HepG2 (cell line): ENCODE measurements at regions of chr19 and their contacts with region 1.

Region 1: GRCh38 chr19:5977785-5978605 is at the start of gene RANBP3:
- DNase-seq: peak; percentile 97
- ATAC-seq: peak; percentile 85
- H3K4me3 ChIP-seq: peak within 1 kb of the TSS; percentile 87 to 98 (median 92)
- H3K27ac ChIP-seq: peak within 1 kb of the TSS; percentile 82
- H3K4me1 ChIP-seq: peaks cover 83% of the 10 kb centered on the region
- H3K27me3 ChIP-seq: no peaks in the 10 kb centered on the region; a peak in 1 of 5 replicates
- CTCF ChIP-seq: no peak
- EP300 ChIP-seq: no peak; a peak in 1 of 4 replicates
- POLR2A ChIP-seq: peak; percentile 51 to 70
- RAD21 ChIP-seq: peak; percentile 9; the same call in 1 of the 2 replicates
- total RNA-seq, gene RANBP3: 37.2 and 39.5 TPM in 2 replicates

Region 2: GRCh38 chr19:5803752-5804515 is 174.1 kb before region 1 on chr19:
- CTCF ChIA-PET with region 1: no interaction called
- POLR2A ChIA-PET with region 1: interaction called, 3 read pairs
- in situ Hi-C with region 1: loop called (anchors 5 kb)
- intact Hi-C with region 1: no loop called
- DNase-seq: peak; percentile 83
- ATAC-seq: peak; percentile 88
- H3K4me3 ChIP-seq: peak overlapping the region; percentile 36 to 68 (median 42)
- H3K27ac ChIP-seq: no peak overlapping the region
- H3K4me1 ChIP-seq: peaks cover 67% of the 10 kb centered on the region
- H3K27me3 ChIP-seq: no peaks in the 10 kb centered on the region; a peak in 1 of 5 replicates
- CTCF ChIP-seq: peak; percentile 99
- EP300 ChIP-seq: peak; percentile 7 to 25; a peak in 1 of 4 replicates
- POLR2A ChIP-seq: peak in 1 of 2 experiments; percentile 42; a peak in 1 of 4 replicates
- RAD21 ChIP-seq: peak; percentile 100

Region 3: GRCh38 chr19:5961969-5962945 is 15.7 kb before region 1 on chr19:
- CTCF ChIA-PET with region 1: no interaction called
- POLR2A ChIA-PET with region 1: interaction called, 30 read pairs
- in situ Hi-C with region 1: no loop called
- intact Hi-C with region 1: no loop called
- DNase-seq: peak; percentile 98
- ATAC-seq: peak; percentile 93
- H3K4me3 ChIP-seq: peak overlapping the region; percentile 19 to 68 (median 41); a peak in 5 of 6 replicates
- H3K27ac ChIP-seq: peak overlapping the region; percentile 95
- H3K4me1 ChIP-seq: peaks cover 99% of the 10 kb centered on the region
- H3K27me3 ChIP-seq: no peaks in the 10 kb centered on the region
- CTCF ChIP-seq: peak; percentile 53
- EP300 ChIP-seq: peak; percentile 20 to 82; a peak in 3 of 4 replicates
- POLR2A ChIP-seq: peak; percentile 45 to 85; a peak in 3 of 4 replicates
- RAD21 ChIP-seq: peak; percentile 36; the same call in 1 of the 2 replicates

Region 4: GRCh38 chr19:6000228-6000847 is 22.3 kb after region 1 on chr19:
- CTCF ChIA-PET with region 1: no interaction called
- POLR2A ChIA-PET with region 1: no interaction called
- in situ Hi-C with region 1: no loop called
- intact Hi-C with region 1: no loop called
- DNase-seq: no peak
- ATAC-seq: no peak
- H3K4me3 ChIP-seq: no peak overlapping the region
- H3K27ac ChIP-seq: no peak overlapping the region
- H3K4me1 ChIP-seq: no peaks in the 10 kb centered on the region
- H3K27me3 ChIP-seq: no peaks in the 10 kb centered on the region; a peak in 1 of 5 replicates
- CTCF ChIP-seq: no peak
- EP300 ChIP-seq: no peak
- POLR2A ChIP-seq: no peak
- RAD21 ChIP-seq: no peak

Region 5: DNA sequence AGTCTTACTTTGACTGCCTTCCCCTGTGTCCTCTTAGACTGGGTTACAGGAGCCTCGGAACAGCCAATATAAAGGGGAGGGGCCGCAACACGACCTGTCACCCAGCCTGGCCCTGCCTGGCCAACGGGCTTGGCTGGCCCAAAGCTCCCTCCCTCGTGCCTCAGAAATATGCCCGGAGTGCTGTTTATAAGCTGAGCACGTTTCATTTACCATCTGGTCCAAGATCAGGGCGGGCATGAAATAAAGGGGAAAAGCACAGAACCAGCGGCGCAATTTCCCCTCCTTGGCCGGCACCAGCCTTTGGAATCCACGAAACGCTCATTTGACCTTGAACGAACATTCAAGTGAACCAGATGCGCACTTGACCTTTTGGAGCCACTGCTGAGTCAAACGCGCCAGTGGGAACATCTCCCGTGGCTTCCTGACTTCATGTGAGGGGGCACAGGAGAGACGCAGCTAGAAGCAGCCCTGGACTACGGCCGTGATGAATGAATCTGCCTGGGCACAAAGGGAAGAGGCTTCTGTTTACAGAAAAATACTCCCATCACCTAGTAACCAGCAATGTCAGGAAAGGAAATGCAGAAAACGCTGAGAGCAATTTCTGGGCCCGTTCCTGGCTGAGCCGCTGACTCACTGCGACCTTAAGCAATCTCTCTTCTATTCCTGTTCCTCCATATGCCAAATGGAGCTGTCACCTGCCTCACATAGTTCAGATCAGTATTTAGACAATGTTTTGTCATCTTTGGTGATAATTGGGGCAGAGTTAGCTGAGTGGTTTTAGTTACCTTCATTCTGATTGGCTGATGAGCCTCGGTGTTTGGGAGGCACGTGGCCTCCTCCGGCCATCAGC is 79.0 kb after region 1 on chr19:
- CTCF ChIA-PET with region 1: no interaction called
- POLR2A ChIA-PET with region 1: no interaction called
- in situ Hi-C with region 1: no loop called
- intact Hi-C with region 1: no loop called
- DNase-seq: peak; percentile 77
- ATAC-seq: peak; percentile 75
- H3K4me3 ChIP-seq: peak overlapping the region in 1 of 3 experiments; percentile 25; a peak in 1 of 6 replicates
- H3K27ac ChIP-seq: peak overlapping the region; percentile 29
- H3K4me1 ChIP-seq: peaks cover 24% of the 10 kb centered on the region
- H3K27me3 ChIP-seq: no peaks in the 10 kb centered on the region
- CTCF ChIP-seq: no peak
- EP300 ChIP-seq: 0 out of 4 replicates have a peak, but pooled peaks of 1 of the 2 experiments have one; percentile 28
- POLR2A ChIP-seq: 0 out of 4 replicates have a peak, but pooled peaks of 1 of the 2 experiments have one; percentile 31
- RAD21 ChIP-seq: no peak